ENCODE measurements at regions of chr20 and their contacts with region 1.

Region 1: GRCh38 chr20:62822788-62823651 is 6.2 kb downstream of the COL9A3 start:
- DNase-seq: peak; percentile 80 to 95 (median 88)
- ATAC-seq: peak; percentile 89
- H3K4me3 ChIP-seq: no peak overlapping the region
- H3K27ac ChIP-seq: peak overlapping the region; percentile 41; the same call in 1 of the 3 replicates
- H3K4me1 ChIP-seq: peaks cover 12 to 100% of the 10 kb centered on the region in 2 experiments
- H3K27me3 ChIP-seq: no peaks in the 10 kb centered on the region
- CTCF ChIP-seq: peak; percentile 90 to 98 (median 97)
- EP300 ChIP-seq: peak; percentile 61
- POLR2A ChIP-seq: no peak
- RAD21 ChIP-seq: peak; percentile 93 to 97

Region 2: DNA sequence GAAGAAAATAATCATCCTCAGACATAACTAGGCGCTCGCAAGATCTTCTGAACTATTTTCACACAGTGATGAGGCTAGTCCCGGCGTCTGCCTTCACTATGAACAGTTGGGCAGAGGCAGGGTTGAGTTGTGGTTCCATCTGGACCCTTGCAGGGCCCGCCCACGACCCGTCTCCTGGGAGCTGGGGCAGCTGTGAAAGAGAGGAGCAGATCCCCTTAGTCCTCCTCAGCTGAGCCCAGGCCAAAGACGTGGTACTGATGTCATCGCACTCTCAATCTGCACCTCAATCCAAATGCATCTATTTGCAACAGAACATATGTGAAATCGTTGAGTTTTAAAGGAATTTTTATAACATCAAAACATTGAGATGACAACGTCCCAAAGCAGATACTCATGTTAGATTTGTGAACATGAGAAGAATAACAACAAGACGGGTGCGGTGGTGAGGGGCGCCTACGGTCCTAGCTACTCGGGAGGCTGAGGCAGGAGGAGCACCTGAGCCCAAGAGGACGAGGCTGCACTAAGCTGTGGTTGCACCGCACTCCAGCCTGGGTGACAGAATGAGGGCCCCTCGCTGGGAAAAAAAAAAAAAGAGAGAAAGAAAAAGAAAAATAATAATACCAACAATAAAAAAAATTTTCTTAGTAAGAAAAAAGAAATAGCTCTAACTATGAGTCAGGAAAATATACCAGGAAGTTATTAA is 23.3 kb after region 1 on chr20:
- CTCF ChIA-PET with region 1: no interaction called
- POLR2A ChIA-PET with region 1: interaction called, 3 read pairs
- in situ Hi-C with region 1: no loop called
- intact Hi-C with region 1: loop called (anchors 2 kb)
- DNase-seq: no peak
- ATAC-seq: no peak
- H3K4me3 ChIP-seq: no peak overlapping the region
- H3K27ac ChIP-seq: no peak overlapping the region
- H3K4me1 ChIP-seq: peaks cover 0 to 13% of the 10 kb centered on the region in 2 experiments; a peak in 1 of 5 replicates
- H3K27me3 ChIP-seq: no peaks in the 10 kb centered on the region
- CTCF ChIP-seq: no peak
- EP300 ChIP-seq: no peak
- POLR2A ChIP-seq: no peak
- RAD21 ChIP-seq: no peak

Region 3: DNA sequence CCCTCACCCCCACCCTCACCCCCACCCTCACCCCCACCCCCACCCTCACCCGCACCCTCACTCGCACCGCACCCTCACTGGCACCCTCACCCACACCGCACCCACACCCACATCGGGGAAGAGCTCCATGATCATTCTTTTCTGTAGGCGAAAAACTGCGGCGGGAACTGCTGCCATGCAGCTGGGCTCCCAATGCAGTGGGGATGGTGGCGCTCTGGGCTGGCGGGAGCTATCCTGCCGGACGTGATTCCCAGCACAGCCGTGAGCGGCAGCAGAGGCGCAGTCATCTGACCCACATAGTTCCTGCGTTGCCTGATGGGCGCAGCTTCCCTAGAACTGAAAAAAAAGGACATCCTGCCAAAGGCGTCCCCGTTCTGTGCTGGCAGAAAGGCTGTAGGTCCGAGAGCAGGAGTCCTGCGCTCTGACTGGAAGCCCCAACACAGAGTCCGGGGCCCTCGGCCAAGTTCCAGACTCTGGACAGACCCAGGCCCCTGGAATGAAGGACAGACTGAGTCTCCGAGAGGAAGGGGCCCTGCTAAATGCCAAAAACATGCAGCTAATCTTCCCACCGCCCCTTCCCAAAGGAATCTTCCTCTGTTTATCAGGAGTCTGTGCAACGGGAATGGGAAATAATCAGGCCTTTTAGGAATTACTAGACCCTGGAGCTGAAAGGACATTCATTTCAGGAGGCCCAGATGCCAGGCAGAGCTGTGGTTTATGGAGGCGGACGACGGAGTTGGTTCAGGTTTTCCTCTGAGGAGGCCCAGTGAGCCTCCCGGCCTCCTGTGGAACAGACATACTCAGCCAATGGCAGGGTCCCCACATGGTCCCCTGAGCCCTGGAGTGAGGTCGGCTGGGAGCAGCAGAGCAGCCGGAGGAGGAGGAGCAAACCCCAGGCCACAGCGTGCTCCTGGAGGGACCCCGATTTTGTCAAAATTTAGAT is 52.7 kb after region 1 on chr20:
- CTCF ChIA-PET with region 1: no interaction called
- POLR2A ChIA-PET with region 1: interaction called, 3 read pairs
- in situ Hi-C with region 1: no loop called
- intact Hi-C with region 1: loop called (anchors 10 kb)
- DNase-seq: peak; percentile 75 to 91 (median 83)
- ATAC-seq: peak; percentile 97
- H3K4me3 ChIP-seq: peak overlapping the region; percentile 21; the same call in 1 of the 2 replicates
- H3K27ac ChIP-seq: peak overlapping the region; percentile 84
- H3K4me1 ChIP-seq: peaks cover 24 to 59% of the 10 kb centered on the region in 2 experiments
- H3K27me3 ChIP-seq: no peaks in the 10 kb centered on the region
- CTCF ChIP-seq: peak; percentile 84 to 95 (median 94)
- EP300 ChIP-seq: peak; percentile 10; the same call in 1 of the 2 replicates
- POLR2A ChIP-seq: no peak
- RAD21 ChIP-seq: peak; percentile 12 to 57; a peak in 3 of 4 replicates

Region 4: GRCh38 chr20:62893700-62894099 is 70.7 kb after region 1 on chr20:
- CTCF ChIA-PET with region 1: interaction called, 7 read pairs
- POLR2A ChIA-PET with region 1: interaction called, 6 read pairs
- in situ Hi-C with region 1: no loop called
- intact Hi-C with region 1: loop called (anchors 2 kb)
- DNase-seq: no peak
- ATAC-seq: no peak
- H3K4me3 ChIP-seq: no peak overlapping the region
- H3K27ac ChIP-seq: no peak overlapping the region
- H3K4me1 ChIP-seq: peaks cover 0 to 4% of the 10 kb centered on the region in 2 experiments; a peak in 1 of 5 replicates
- H3K27me3 ChIP-seq: no peaks in the 10 kb centered on the region
- CTCF ChIP-seq: peak; percentile 26 to 34 (median 33); a peak in 1 of 6 replicates
- EP300 ChIP-seq: no peak
- POLR2A ChIP-seq: no peak
- RAD21 ChIP-seq: peak in 1 of 2 experiments; percentile 22; a peak in 2 of 4 replicates

Region 5: GRCh38 chr20:62900052-62900691 is 77.2 kb after region 1 on chr20:
- CTCF ChIA-PET with region 1: no interaction called
- POLR2A ChIA-PET with region 1: interaction called, 6 read pairs
- in situ Hi-C with region 1: no loop called
- intact Hi-C with region 1: loop called (anchors 2 kb)
- DNase-seq: peak; percentile 78 to 91 (median 84)
- ATAC-seq: peak; percentile 98
- H3K4me3 ChIP-seq: no peak overlapping the region
- H3K27ac ChIP-seq: peak overlapping the region; percentile 46; the same call in 1 of the 3 replicates
- H3K4me1 ChIP-seq: peaks cover 6 to 10% of the 10 kb centered on the region in 2 experiments
- H3K27me3 ChIP-seq: no peaks in the 10 kb centered on the region
- CTCF ChIP-seq: peak; percentile 92 to 93 (median 93)
- EP300 ChIP-seq: 0 out of 2 replicates have a peak, but pooled peaks have one; percentile 22
- POLR2A ChIP-seq: peak; percentile 69
- RAD21 ChIP-seq: peak; percentile 48 to 74

Region 6: DNA sequence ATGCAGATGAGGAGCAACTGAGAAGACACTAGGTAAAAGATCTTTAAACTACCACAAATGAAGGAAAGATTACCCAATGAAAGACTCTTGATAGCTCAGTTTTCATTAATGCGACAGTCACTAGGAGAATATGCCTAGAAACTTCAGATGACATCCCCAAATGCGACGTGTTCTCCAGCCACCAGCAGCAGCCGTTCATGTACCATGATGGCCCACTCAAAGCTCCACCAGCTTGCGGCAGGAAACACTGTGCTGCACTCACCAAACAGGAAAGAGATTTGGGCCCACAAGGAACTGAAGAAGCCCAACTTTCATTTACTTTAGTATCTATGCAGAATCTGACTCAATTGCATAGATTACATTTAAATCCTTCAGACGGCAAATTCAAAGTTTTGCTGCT is 95.8 kb after region 1 on chr20:
- CTCF ChIA-PET with region 1: no interaction called
- POLR2A ChIA-PET with region 1: no interaction called
- in situ Hi-C with region 1: no loop called
- intact Hi-C with region 1: no loop called
- DNase-seq: no peak
- ATAC-seq: no peak
- H3K4me3 ChIP-seq: no peak overlapping the region
- H3K27ac ChIP-seq: no peak overlapping the region
- H3K4me1 ChIP-seq: peaks cover 32 to 39% of the 10 kb centered on the region in 2 experiments; a peak in 3 of 5 replicates
- H3K27me3 ChIP-seq: no peaks in the 10 kb centered on the region
- CTCF ChIP-seq: no peak
- EP300 ChIP-seq: no peak
- POLR2A ChIP-seq: no peak
- RAD21 ChIP-seq: no peak

Region 7: DNA sequence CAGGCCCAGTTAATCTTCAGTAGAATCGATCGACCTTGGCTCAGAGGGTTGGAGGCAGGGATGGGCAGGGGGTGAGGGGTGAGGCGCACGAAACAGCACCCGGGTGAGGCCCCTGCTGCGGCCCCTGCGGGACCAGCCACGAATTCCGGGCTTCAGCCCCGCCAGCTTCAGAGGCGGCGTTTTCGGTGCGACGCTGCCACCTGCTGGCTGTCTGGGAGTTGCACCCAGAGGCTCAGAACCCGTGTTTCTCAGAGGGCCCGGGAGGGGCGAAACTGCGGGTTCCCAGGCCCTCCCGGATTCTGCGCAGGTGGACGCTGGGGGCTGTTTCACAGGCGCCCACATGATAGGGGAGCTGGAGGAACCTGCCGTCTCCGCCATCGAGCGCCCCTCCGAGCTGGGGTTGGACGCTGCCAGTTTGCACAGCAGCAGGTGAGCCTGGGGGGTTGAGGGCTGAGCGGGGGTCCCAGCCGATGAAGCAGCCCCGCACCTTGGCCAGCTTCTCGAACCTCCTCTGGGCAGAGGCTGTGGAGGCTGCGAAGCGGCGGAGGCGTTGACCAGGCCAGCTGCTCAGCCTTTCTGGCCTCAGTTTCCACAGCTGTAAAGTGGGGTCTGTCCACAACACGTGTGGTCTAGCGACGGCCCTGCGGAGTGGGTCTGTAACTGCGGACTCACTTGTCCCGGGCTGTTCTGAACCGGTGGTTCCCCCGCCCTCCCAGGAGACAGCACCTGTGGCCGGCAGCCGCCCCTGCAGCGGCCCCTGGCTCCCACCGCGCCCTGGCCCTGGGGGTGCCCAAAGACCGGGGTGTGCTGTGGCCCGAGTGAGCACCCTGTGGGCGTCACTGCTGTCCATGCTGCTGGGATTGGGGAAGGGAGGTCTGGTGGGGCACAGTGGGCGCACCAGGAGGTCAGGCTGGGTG is 186.3 kb after region 1 on chr20:
- CTCF ChIA-PET with region 1: interaction called, 18 read pairs
- POLR2A ChIA-PET with region 1: interaction called, 3 read pairs
- in situ Hi-C with region 1: loop called (anchors 10 kb)
- intact Hi-C with region 1: loop called (anchors 1 kb)
- DNase-seq: peak; percentile 85 to 91 (median 86)
- ATAC-seq: peak; percentile 99
- H3K4me3 ChIP-seq: no peak overlapping the region
- H3K27ac ChIP-seq: no peak overlapping the region
- H3K4me1 ChIP-seq: peaks cover 5 to 37% of the 10 kb centered on the region in 2 experiments; a peak in 3 of 5 replicates
- H3K27me3 ChIP-seq: peaks cover 35 to 54% of the 10 kb centered on the region in 2 experiments
- CTCF ChIP-seq: peak; percentile 89 to 98 (median 97)
- EP300 ChIP-seq: no peak
- POLR2A ChIP-seq: no peak
- RAD21 ChIP-seq: peak; percentile 94 to 97

Region 8: GRCh38 chr20:63230800-63231268 is 407.8 kb after region 1 on chr20:
- CTCF ChIA-PET with region 1: no interaction called
- POLR2A ChIA-PET with region 1: no interaction called
- in situ Hi-C with region 1: no loop called
- intact Hi-C with region 1: no loop called
- DNase-seq: peak; percentile 42 to 53 (median 50)
- ATAC-seq: peak; percentile 83
- H3K4me3 ChIP-seq: no peak overlapping the region
- H3K27ac ChIP-seq: no peak overlapping the region
- H3K4me1 ChIP-seq: peaks cover 0 to 29% of the 10 kb centered on the region in 2 experiments; a peak in 3 of 5 replicates
- H3K27me3 ChIP-seq: peaks cover 35 to 60% of the 10 kb centered on the region in 2 experiments
- CTCF ChIP-seq: peak; percentile 60 to 65 (median 64)
- EP300 ChIP-seq: no peak
- POLR2A ChIP-seq: no peak
- RAD21 ChIP-seq: peak in 1 of 2 experiments; percentile 41; a peak in 2 of 4 replicates